Natural killer cell (primary cell): ENCODE measurements at regions of chr18 and their contacts with region 1.

Region 1: DNA sequence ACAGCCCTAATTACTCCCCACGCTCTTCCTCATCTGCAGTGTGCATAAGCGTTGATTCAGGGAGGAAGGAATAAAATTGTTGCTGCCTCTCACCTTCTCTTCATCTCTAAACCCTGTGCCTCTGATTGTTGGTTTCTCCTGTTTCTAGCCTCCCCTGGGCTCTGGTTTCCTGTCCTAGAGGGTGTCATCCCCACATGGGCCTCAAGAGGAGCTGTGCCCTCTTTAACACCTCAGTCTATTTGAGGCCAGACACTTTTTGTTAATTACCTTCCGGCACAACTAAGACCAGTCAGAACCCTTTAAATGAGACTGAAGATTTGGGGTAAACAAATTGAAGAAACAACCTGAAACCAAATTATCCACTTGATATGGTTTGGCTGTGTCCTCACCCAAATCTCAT is 9.7 kb downstream of the CTAGE1 start:
- DNase-seq: peak; percentile 33 to 48
- ATAC-seq: peak; percentile 89 to 96 (median 93)
- H3K4me3 ChIP-seq: no peak overlapping the region
- H3K4me3 Mint-ChIP-seq: peak overlapping the region; percentile 84
- H3K27ac ChIP-seq: peak overlapping the region; percentile 72
- H3K27ac Mint-ChIP-seq: peak overlapping the region; percentile 88 to 92
- H3K4me1 ChIP-seq: peaks cover 32% of the 10 kb centered on the region
- H3K4me1 Mint-ChIP-seq: peaks cover 49 to 52% of the 10 kb centered on the region in 2 donors
- H3K27me3 ChIP-seq: no peaks in the 10 kb centered on the region
- H3K27me3 Mint-ChIP-seq: peaks cover 0 to 2% of the 10 kb centered on the region in 2 donors
- CTCF ChIP-seq: peak; percentile 57

Region 2: GRCh38 chr18:22348521-22349316 is 59.3 kb before region 1 on chr18:
- intact Hi-C with region 1: loop called (anchors 5 kb)
- DNase-seq: peak; percentile 34 to 43
- ATAC-seq: peak in 1 of 3 donors; percentile 3
- H3K4me3 ChIP-seq: peak overlapping the region; percentile 79
- H3K4me3 Mint-ChIP-seq: peak overlapping the region; percentile 92
- H3K27ac ChIP-seq: peak overlapping the region; percentile 94
- H3K27ac Mint-ChIP-seq: peak overlapping the region; percentile 92 to 97
- H3K4me1 ChIP-seq: peaks cover 44% of the 10 kb centered on the region
- H3K4me1 Mint-ChIP-seq: peaks cover 65% of the 10 kb centered on the region in 2 donors
- H3K27me3 ChIP-seq: no peaks in the 10 kb centered on the region
- H3K27me3 Mint-ChIP-seq: no peaks in the 10 kb centered on the region
- CTCF ChIP-seq: no peak